Mammary epithelial cell (primary cell): ENCODE measurements at regions of chr14 and their contacts with region 1.

Region 1: GRCh38 chr14:36941783-36942521 is 230.5 kb downstream of the SLC25A21 start:
- DNase-seq: peak; percentile 55
- H3K4me3 ChIP-seq: no peak overlapping the region
- H3K27ac ChIP-seq: no peak overlapping the region
- H3K4me1 ChIP-seq: peaks cover 13% of the 10 kb centered on the region
- H3K27me3 ChIP-seq: no peaks in the 10 kb centered on the region
- CTCF ChIP-seq: peak; percentile 98 to 99

Region 2: DNA sequence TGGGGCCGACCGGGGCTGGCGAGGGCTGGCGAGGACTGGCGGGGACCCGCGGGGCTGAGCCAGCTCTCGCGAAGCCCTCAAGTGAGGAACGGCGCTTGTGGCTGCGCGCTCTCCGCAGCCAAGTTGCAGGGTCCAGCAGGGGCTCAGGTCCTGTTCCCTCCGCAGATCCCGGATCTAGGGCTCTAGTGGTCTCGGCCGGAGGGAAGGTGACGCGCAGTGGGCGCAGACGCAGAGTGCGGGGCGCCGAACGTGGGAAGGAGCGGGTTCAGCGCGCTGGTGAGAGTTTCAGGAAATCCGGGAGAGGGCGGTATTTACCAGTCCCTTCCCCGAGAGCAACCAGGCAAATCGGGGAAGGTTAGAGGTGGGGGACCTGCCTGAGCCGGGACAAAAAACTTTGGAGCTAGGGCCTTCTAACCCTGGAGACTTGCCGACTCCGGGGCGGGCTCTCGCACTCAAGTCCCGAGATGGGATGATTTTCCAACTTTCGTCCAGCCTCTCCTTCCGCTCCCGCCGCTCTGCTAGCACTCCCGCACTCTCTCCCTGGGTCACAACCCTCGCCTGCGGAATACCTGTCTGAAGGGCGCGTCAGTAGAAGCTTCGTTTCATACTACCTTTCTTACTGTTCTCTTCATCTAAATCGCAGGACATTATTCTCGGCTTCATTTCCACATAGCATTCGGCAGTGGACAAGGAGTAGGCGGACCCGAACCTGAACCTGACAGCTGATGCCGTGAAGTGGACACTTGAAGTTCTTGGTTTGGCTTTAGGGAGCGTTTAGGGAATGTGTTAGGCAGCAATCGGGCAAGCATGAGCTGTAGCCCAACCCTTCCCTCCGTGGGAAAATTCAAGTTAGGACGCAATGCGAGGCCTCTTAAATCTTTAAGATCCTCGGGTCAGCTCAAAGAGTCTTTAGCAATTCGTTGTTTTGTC is 293.9 kb before region 1 on chr14:
- CTCF ChIA-PET with region 1: interaction called, 14 read pairs
- dilution Hi-C with region 1: loop called (anchors 5 kb)
- in situ Hi-C with region 1: loop called (anchors 10 to 25 kb)
- intact Hi-C with region 1: loop called (anchors 1 kb)
- DNase-seq: peak; percentile 58
- H3K4me3 ChIP-seq: peak overlapping the region; percentile 51 to 66 (median 56)
- H3K27ac ChIP-seq: no peak overlapping the region
- H3K4me1 ChIP-seq: peaks cover 16% of the 10 kb centered on the region
- H3K27me3 ChIP-seq: peaks cover 47% of the 10 kb centered on the region
- CTCF ChIP-seq: peak; percentile 52 to 78

Region 3: GRCh38 chr14:36747411-36748184 is 194.4 kb before region 1 on chr14:
- CTCF ChIA-PET with region 1: interaction called, 4 read pairs
- dilution Hi-C with region 1: no loop called
- in situ Hi-C with region 1: no loop called
- intact Hi-C with region 1: loop called (anchors 2 kb)
- DNase-seq: no peak
- H3K4me3 ChIP-seq: no peak overlapping the region
- H3K27ac ChIP-seq: no peak overlapping the region
- H3K4me1 ChIP-seq: no peaks in the 10 kb centered on the region
- H3K27me3 ChIP-seq: peaks cover 4% of the 10 kb centered on the region
- CTCF ChIP-seq: peak; percentile 56 to 65

Region 4: DNA sequence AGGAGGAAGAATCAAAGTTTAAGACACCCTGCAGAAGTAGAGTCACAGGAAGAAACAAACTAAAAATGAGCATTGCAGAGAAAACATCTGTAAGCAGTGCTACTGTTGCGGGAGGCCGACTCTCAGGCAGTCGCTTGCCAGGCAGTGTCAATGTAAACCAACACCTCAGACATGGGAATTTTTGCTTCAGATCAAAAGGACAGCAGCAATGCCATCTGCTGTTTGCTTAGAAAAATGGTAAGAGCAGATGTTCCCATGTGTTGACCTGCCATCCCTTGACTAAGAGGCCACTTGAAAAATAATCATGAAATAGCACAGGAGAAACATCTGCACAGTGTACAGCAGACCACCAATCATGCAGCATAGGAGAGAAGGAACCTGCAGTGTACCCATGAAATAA is 33.9 kb after region 1 on chr14:
- CTCF ChIA-PET with region 1: no interaction called
- dilution Hi-C with region 1: no loop called
- in situ Hi-C with region 1: no loop called
- intact Hi-C with region 1: loop called (anchors 5 kb)
- DNase-seq: peak; percentile 19
- H3K4me3 ChIP-seq: no peak overlapping the region
- H3K27ac ChIP-seq: no peak overlapping the region
- H3K4me1 ChIP-seq: peaks cover 33% of the 10 kb centered on the region
- H3K27me3 ChIP-seq: no peaks in the 10 kb centered on the region
- CTCF ChIP-seq: peak in 1 of 2 donors; percentile 12

Region 5: GRCh38 chr14:36996133-36996856 is 54.3 kb after region 1 on chr14:
- CTCF ChIA-PET with region 1: no interaction called
- dilution Hi-C with region 1: no loop called
- in situ Hi-C with region 1: no loop called
- intact Hi-C with region 1: no loop called
- DNase-seq: peak; percentile 71
- H3K4me3 ChIP-seq: no peak overlapping the region
- H3K27ac ChIP-seq: no peak overlapping the region
- H3K4me1 ChIP-seq: peaks cover 16% of the 10 kb centered on the region
- H3K27me3 ChIP-seq: no peaks in the 10 kb centered on the region
- CTCF ChIP-seq: no peak

Region 6: GRCh38 chr14:37150414-37150813 is 208.5 kb after region 1 on chr14:
- CTCF ChIA-PET with region 1: interaction called, 4 read pairs
- dilution Hi-C with region 1: no loop called
- in situ Hi-C with region 1: no loop called
- intact Hi-C with region 1: loop called (anchors 1 kb)
- DNase-seq: peak; percentile 36
- H3K4me3 ChIP-seq: no peak overlapping the region
- H3K27ac ChIP-seq: no peak overlapping the region
- H3K4me1 ChIP-seq: peaks cover 2% of the 10 kb centered on the region
- H3K27me3 ChIP-seq: no peaks in the 10 kb centered on the region
- CTCF ChIP-seq: peak; percentile 65 to 68